ENCODE measurements at regions of chr11 and their contacts with region 1.

Region 1: DNA sequence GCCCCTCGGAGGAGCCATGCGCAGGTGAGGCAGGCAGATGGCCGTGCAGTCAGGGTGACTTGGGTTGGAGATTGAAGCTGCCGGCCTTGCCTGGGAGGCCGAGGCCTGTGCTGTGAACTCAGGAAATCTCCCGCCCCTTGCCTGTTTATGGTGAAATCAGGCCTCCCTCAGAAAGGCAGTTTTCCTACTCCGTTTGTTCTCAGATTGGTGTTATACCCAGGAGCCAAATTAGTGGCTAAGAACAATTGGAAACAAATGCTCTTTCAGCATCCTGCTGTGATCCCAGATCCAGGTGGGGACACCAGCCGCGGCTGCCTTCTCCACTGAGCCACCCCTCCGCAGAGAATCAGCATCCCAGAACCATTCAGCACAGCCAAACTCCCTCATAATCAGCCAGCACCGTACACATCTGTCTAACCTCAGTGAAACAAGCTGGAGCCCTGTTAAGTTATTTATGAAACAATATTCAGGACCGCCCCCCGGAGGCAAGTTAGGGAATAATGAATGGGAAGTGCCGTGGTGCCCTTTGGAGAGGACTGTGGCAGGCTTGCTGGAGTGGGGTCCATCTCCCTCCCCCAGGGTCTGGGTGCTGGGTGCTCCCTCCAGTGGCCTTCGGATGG is 60.0 kb downstream of the PKNOX2 start:
- DNase-seq: no peak
- H3K4me3 ChIP-seq: no peak overlapping the region
- H3K27ac ChIP-seq: peak overlapping the region; percentile 17; the same call in 1 of the 2 replicates
- H3K4me1 ChIP-seq: peaks cover 7 to 26% (median 18%) of the 10 kb centered on the region in 4 experiments
- H3K27me3 ChIP-seq: no peaks in the 10 kb centered on the region; a peak in 1 of 7 replicates
- CTCF ChIP-seq: peak; percentile 27 to 40 (median 34); a peak in 3 of 4 replicates
- EP300 ChIP-seq: no peak
- POLR2A ChIP-seq: no peak
- RAD21 ChIP-seq: peak; percentile 40 to 48

Region 2: DNA sequence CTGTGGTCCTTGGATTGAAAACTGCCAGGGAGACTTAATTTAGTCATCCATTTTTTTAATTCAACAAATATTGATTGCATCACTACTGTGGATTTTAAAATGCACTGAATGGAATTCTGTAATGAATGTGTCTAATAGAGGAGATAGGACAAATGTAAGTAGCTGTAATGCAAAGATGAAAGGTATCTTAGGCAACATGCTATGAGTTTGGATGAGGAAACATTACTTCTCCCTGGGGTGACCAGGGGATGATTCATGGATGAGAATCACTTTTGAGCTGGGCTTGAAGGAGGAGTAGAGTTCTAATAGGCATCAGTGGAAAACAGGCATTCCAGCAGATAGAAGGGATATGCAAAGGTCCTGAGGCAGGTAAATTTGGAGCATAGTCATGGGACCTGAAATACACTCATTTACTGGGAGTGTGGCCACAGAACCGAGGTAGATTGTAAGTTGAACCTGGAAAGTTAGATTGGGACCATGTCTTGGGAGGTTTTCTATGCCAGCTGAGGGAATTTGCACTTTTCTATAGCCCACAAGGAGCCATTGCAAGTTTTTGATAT is 16.6 kb before region 1 on chr11:
- CTCF ChIA-PET with region 1: interaction called, 44 read pairs
- POLR2A ChIA-PET with region 1: no interaction called
- DNase-seq: no peak
- H3K4me3 ChIP-seq: no peak overlapping the region
- H3K27ac ChIP-seq: no peak overlapping the region
- H3K4me1 ChIP-seq: peaks cover 14 to 35% (median 21%) of the 10 kb centered on the region in 4 experiments
- H3K27me3 ChIP-seq: peaks cover 0 to 2% (median 0%) of the 10 kb centered on the region in 4 experiments; a peak in 4 of 7 replicates
- CTCF ChIP-seq: no peak
- EP300 ChIP-seq: no peak
- POLR2A ChIP-seq: no peak
- RAD21 ChIP-seq: no peak

Region 3: GRCh38 chr11:125235071-125235471 is 10.6 kb after region 1 on chr11:
- CTCF ChIA-PET with region 1: interaction called, 19 read pairs
- POLR2A ChIA-PET with region 1: interaction called, 3 read pairs
- DNase-seq: no peak
- H3K4me3 ChIP-seq: no peak overlapping the region
- H3K27ac ChIP-seq: no peak overlapping the region
- H3K4me1 ChIP-seq: peaks cover 0 to 10% (median 3%) of the 10 kb centered on the region in 4 experiments; a peak in 5 of 7 replicates
- H3K27me3 ChIP-seq: peaks cover 0 to 4% (median 0%) of the 10 kb centered on the region in 4 experiments; a peak in 1 of 7 replicates
- CTCF ChIP-seq: no peak
- EP300 ChIP-seq: no peak
- POLR2A ChIP-seq: no peak
- RAD21 ChIP-seq: no peak

Measured in H1 (cell line).